ENCODE measurements at regions of chr11 and their contacts with region 1.

Region 1: GRCh38 chr11:102341844-102342318 is 5.1 kb upstream of the BIRC2 start:
- DNase-seq: peak; percentile 84
- ATAC-seq: peak; percentile 43
- H3K4me3 Mint-ChIP-seq: no peak overlapping the region
- H3K27ac Mint-ChIP-seq: no peak overlapping the region
- H3K4me1 Mint-ChIP-seq: peaks cover 45% of the 10 kb centered on the region
- H3K27me3 Mint-ChIP-seq: no peaks in the 10 kb centered on the region

Region 2: DNA sequence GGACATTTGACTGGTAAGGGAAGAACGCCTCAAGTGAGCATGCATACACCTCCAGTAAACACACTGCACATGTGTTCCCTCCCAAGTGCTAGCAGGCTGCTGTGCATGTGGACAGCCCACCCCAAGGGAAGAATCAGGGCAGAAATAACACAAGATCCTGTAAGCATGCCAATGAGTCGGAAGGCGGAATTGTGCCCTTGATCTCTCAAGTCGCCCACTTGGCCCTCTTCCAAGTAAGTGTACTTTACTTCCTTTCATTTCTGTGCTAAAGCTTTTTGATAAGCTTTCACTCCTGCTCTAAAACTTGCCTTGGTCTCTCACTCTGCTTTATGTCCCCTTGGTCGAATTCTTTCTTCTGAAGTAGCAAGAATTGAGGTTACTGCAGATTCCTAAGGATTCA is 897.7 kb before region 1 on chr11:
- CTCF ChIA-PET with region 1: no interaction called
- POLR2A ChIA-PET with region 1: no interaction called
- intact Hi-C with region 1: no loop called
- DNase-seq: no peak
- ATAC-seq: no peak
- H3K4me3 Mint-ChIP-seq: no peak overlapping the region
- H3K27ac Mint-ChIP-seq: no peak overlapping the region
- H3K4me1 Mint-ChIP-seq: no peaks in the 10 kb centered on the region
- H3K27me3 Mint-ChIP-seq: no peaks in the 10 kb centered on the region

Region 3: GRCh38 chr11:101996111-101996510 is 345.8 kb before region 1 on chr11:
- CTCF ChIA-PET with region 1: no interaction called
- POLR2A ChIA-PET with region 1: no interaction called
- intact Hi-C with region 1: no loop called
- DNase-seq: no peak
- ATAC-seq: no peak
- H3K4me3 Mint-ChIP-seq: no peak overlapping the region
- H3K27ac Mint-ChIP-seq: no peak overlapping the region
- H3K4me1 Mint-ChIP-seq: no peaks in the 10 kb centered on the region
- H3K27me3 Mint-ChIP-seq: no peaks in the 10 kb centered on the region

Region 4: GRCh38 chr11:102139081-102139498 is 202.8 kb before region 1 on chr11:
- CTCF ChIA-PET with region 1: no interaction called
- POLR2A ChIA-PET with region 1: no interaction called
- intact Hi-C with region 1: no loop called
- DNase-seq: no peak
- ATAC-seq: no peak
- H3K4me3 Mint-ChIP-seq: no peak overlapping the region
- H3K27ac Mint-ChIP-seq: no peak overlapping the region
- H3K4me1 Mint-ChIP-seq: no peaks in the 10 kb centered on the region
- H3K27me3 Mint-ChIP-seq: peaks cover 9% of the 10 kb centered on the region

Region 5: GRCh38 chr11:102279641-102280170 is 62.2 kb before region 1 on chr11:
- CTCF ChIA-PET with region 1: interaction called, 10 read pairs
- POLR2A ChIA-PET with region 1: no interaction called
- intact Hi-C with region 1: no loop called
- DNase-seq: peak; percentile 59
- ATAC-seq: peak; percentile 96
- H3K4me3 Mint-ChIP-seq: peak overlapping the region; percentile 27
- H3K27ac Mint-ChIP-seq: peak overlapping the region; percentile 27
- H3K4me1 Mint-ChIP-seq: peaks cover 16% of the 10 kb centered on the region
- H3K27me3 Mint-ChIP-seq: peaks cover 8% of the 10 kb centered on the region

Region 6: DNA sequence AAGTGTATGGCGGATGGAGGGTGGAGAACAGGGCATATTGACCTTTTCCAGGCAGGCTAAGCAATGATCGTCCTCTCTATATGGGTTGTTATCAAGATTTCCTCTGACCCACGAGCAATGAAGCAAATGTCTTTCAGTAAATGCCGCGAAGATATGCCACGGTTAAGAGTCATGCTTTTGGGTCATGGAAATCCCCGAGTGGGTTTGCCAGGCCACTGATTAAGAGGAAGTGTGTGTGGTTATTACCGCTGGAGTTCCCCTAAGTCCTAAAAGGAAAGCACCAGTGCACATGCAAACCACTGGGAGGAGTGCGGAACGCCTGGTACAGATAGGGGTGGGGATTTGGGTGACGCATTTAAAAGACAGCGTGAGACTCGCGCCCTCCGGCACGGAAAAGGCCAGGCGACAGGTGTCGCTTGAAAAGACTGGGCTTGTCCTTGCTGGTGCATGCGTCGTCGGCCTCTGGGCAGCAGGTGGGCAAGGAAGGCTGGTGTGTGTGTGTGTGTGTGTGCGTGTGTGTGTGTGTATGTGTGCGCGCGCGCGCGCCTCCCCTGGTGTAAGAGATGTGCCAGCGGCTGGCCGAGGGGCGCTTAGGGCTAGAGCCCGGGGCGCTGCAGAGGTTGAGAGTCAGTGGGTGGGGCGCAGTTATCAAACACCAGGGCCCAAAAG is 24.6 kb before region 1 on chr11 and contains the start of gene BIRC3:
- CTCF ChIA-PET with region 1: interaction called, 27 read pairs
- POLR2A ChIA-PET with region 1: no interaction called
- intact Hi-C with region 1: loop called (anchors 1 kb)
- DNase-seq: peak; percentile 95
- ATAC-seq: peak; percentile 85
- H3K4me3 Mint-ChIP-seq: peak within 1 kb of the TSS; percentile 96
- H3K27ac Mint-ChIP-seq: peak within 1 kb of the TSS; percentile 99
- H3K4me1 Mint-ChIP-seq: peaks cover 68% of the 10 kb centered on the region
- H3K27me3 Mint-ChIP-seq: no peaks in the 10 kb centered on the region
- total RNA-seq, gene BIRC3: 99.2 to 109 TPM

Region 7: GRCh38 chr11:102367364-102367763 is 25.5 kb after region 1 on chr11:
- CTCF ChIA-PET with region 1: interaction called, 10 read pairs
- POLR2A ChIA-PET with region 1: no interaction called
- intact Hi-C with region 1: no loop called
- DNase-seq: no peak
- ATAC-seq: peak; percentile 50
- H3K4me3 Mint-ChIP-seq: no peak overlapping the region
- H3K27ac Mint-ChIP-seq: no peak overlapping the region
- H3K4me1 Mint-ChIP-seq: peaks cover 27% of the 10 kb centered on the region
- H3K27me3 Mint-ChIP-seq: no peaks in the 10 kb centered on the region

Region 8: DNA sequence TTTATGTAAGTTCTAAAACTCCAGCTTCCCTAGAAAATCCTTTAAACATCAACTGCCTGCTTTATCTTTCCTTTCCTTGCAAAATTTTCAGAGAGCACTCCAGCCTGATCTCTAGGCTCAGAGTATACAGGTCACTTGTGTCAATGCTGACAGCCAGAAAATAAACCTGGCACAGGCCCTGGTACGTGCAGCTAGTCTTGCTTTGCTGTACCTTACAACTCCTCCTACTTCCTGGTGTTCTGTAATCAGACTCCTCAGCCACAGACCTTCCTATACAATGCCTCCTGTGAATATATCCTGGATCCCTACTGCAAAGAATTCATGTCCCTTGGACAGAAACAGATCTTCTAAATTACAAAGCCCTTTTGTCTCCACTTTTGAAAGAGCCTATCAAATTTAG is 134.9 kb after region 1 on chr11:
- CTCF ChIA-PET with region 1: interaction called, 13 read pairs
- POLR2A ChIA-PET with region 1: no interaction called
- intact Hi-C with region 1: no loop called
- DNase-seq: peak; percentile 74
- ATAC-seq: peak; percentile 86
- H3K4me3 Mint-ChIP-seq: peak overlapping the region; percentile 1
- H3K27ac Mint-ChIP-seq: peak overlapping the region; percentile 81
- H3K4me1 Mint-ChIP-seq: peaks cover 64% of the 10 kb centered on the region
- H3K27me3 Mint-ChIP-seq: no peaks in the 10 kb centered on the region

Region 9: GRCh38 chr11:102614485-102614884 is 272.6 kb after region 1 on chr11:
- CTCF ChIA-PET with region 1: interaction called, 31 read pairs
- POLR2A ChIA-PET with region 1: no interaction called
- intact Hi-C with region 1: loop called (anchors 1 to 2 kb)
- DNase-seq: no peak
- ATAC-seq: no peak
- H3K4me3 Mint-ChIP-seq: no peak overlapping the region
- H3K27ac Mint-ChIP-seq: no peak overlapping the region
- H3K4me1 Mint-ChIP-seq: peaks cover 13% of the 10 kb centered on the region
- H3K27me3 Mint-ChIP-seq: no peaks in the 10 kb centered on the region